CD4-positive, alpha-beta T cell (primary cell): ENCODE measurements at regions of chr20 and their contacts with region 1.

Region 1: DNA sequence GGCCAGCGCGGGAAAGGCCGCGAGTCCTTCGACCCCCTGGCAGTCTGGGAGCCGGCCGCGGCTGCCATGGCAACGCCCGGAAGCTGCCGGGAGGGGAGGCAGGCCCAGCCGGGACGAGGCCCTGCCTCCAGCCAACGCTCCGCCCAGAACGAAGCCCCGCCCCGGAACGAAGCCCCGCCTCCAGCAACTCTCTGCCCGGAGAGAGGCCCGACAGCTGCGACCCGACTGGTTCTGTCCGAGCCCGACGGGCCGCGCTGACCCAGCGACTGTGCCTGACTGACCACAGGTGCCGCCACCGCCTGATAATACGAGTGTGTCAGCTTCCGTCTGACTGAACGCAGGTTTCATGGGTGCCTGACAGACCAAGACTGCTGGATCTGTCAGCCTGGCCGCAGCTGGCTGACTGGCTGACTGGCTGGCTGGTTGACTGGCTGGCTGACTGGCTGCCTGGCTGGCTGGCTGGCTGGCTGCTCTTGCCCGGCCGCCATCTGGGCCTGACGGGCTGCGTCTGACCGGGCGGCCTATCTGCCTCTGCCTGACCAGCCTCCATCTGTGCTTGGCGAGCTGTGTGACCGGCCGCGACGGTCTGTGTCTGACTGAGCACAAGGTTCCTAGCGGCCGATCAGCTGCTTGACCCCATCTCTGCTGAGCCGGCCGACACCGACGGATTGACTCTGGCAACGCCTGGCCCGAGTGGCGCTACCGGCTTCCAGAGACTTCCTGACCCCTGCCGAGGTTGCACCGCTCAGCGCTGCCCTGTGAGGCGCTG is 89.7 kb upstream of the EPB41L1 start:
- DNase-seq: peak; percentile 86 to 97 (median 94)
- ATAC-seq: peak; percentile 98
- H3K4me3 ChIP-seq: peak overlapping the region; percentile 78
- H3K4me3 Mint-ChIP-seq: peak overlapping the region; percentile 90
- H3K27ac ChIP-seq: peak overlapping the region in 1 of 2 donors; percentile 11
- H3K27ac Mint-ChIP-seq: no peak overlapping the region
- H3K4me1 ChIP-seq: peaks cover 19% of the 10 kb centered on the region
- H3K4me1 Mint-ChIP-seq: peaks cover 5% of the 10 kb centered on the region
- H3K27me3 ChIP-seq: no peaks in the 10 kb centered on the region
- H3K27me3 Mint-ChIP-seq: no peaks in the 10 kb centered on the region
- CTCF ChIP-seq: no peak

Region 2: DNA sequence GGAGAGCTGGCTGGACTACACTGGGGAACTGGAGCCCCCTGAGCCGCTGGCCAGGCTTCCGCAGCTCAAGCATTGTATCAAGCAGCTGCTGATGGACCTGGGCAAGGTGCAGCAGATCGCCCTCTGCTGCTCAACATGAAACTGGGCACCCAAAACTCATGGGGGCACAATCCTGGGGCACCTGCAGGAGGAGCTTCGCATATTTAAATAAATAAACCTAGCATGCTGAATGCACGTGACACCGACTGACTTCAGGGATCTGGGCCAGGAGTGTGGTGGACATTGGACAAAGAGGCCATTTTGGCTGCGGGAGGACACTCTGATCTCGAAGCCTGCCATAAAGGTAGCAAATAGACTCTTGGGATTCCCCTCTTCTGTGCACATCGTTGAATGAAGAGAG is 117.4 kb before region 1 on chr20:
- CTCF ChIA-PET with region 1: no interaction called
- POLR2A ChIA-PET with region 1: no interaction called
- intact Hi-C with region 1: no loop called
- DNase-seq: peak in 7 of 14 experiments; percentile 7 to 53 (median 13)
- ATAC-seq: peak; percentile 68
- H3K4me3 ChIP-seq: no peak overlapping the region
- H3K4me3 Mint-ChIP-seq: no peak overlapping the region
- H3K27ac ChIP-seq: no peak overlapping the region
- H3K27ac Mint-ChIP-seq: no peak overlapping the region
- H3K4me1 ChIP-seq: peaks cover 16% of the 10 kb centered on the region
- H3K4me1 Mint-ChIP-seq: peaks cover 14% of the 10 kb centered on the region
- H3K27me3 ChIP-seq: no peaks in the 10 kb centered on the region
- H3K27me3 Mint-ChIP-seq: no peaks in the 10 kb centered on the region
- CTCF ChIP-seq: peak; percentile 44

Region 3: GRCh38 chr20:36050436-36051317 is 14.2 kb before region 1 on chr20:
- CTCF ChIA-PET with region 1: no interaction called
- POLR2A ChIA-PET with region 1: interaction called, 11 read pairs
- intact Hi-C with region 1: loop called (anchors 1 kb)
- DNase-seq: peak; percentile 77 to 94 (median 90)
- ATAC-seq: peak; percentile 95
- H3K4me3 ChIP-seq: peak overlapping the region; percentile 87
- H3K4me3 Mint-ChIP-seq: peak overlapping the region; percentile 98
- H3K27ac ChIP-seq: peak overlapping the region; percentile 83 to 88
- H3K27ac Mint-ChIP-seq: peak overlapping the region; percentile 94
- H3K4me1 ChIP-seq: peaks cover 7% of the 10 kb centered on the region
- H3K4me1 Mint-ChIP-seq: peaks cover 55% of the 10 kb centered on the region
- H3K27me3 ChIP-seq: no peaks in the 10 kb centered on the region
- H3K27me3 Mint-ChIP-seq: no peaks in the 10 kb centered on the region
- CTCF ChIP-seq: no peak

Region 4: DNA sequence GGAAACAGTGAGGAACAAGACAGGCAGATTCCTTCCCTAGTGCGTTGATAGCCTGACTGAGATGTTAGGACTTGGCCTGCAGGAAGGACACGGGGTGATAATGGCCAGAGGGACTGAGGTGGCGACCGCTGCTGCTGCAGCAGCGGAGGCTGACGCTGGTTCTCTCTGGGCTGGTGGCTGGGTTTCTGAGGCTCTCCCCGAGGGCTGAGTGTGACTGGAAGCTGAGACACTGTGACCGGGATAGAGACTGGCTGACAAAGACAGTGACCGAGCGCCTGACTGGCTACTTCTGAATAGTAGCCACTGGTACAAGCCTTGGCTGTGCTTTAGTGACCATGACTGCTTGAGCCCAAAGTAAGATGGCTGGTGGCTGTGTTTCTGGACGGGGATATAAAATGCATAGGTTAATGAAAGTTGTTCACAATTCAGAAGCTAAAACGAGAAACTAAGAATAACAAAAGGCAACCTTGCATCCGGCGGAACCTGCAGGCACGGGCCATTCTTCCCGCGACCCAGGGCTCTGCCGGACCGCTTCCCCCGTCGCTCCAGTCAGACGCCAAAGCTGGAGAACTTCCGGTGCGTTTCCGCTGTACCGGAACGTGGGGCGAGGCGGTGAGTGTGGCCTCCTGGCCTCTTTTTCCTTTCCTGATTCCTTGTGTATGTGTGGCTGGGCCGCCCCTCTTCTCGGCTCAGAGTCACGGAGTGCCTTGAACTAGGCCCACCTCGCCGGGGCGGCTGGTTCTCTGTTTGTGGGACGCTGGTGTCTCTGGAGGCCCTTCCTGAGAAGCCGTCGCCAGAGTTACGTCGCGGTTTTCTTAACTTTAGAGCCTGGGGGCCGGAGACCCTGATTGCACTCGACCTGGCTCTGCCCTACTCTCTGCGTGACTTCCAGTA is 171.3 kb after region 1 on chr20 and contains the start of gene AAR2:
- CTCF ChIA-PET with region 1: no interaction called
- POLR2A ChIA-PET with region 1: no interaction called
- intact Hi-C with region 1: loop called in 1 of 2 experiments (anchors 5 kb)
- DNase-seq: peak; percentile 65 to 85 (median 75)
- ATAC-seq: peak; percentile 96
- H3K4me3 ChIP-seq: peak within 1 kb of the TSS; percentile 98
- H3K4me3 Mint-ChIP-seq: peak within 1 kb of the TSS; percentile 95
- H3K27ac ChIP-seq: peak within 1 kb of the TSS; percentile 42 to 76
- H3K27ac Mint-ChIP-seq: peak within 1 kb of the TSS; percentile 83
- H3K4me1 ChIP-seq: peaks cover 36% of the 10 kb centered on the region
- H3K4me1 Mint-ChIP-seq: peaks cover 42% of the 10 kb centered on the region
- H3K27me3 ChIP-seq: no peaks in the 10 kb centered on the region
- H3K27me3 Mint-ChIP-seq: no peaks in the 10 kb centered on the region
- CTCF ChIP-seq: no peak
- total RNA-seq, gene AAR2: 22.5 to 24.3 TPM

Region 5: GRCh38 chr20:36460648-36461599 is 396.1 kb after region 1 on chr20:
- CTCF ChIA-PET with region 1: no interaction called
- POLR2A ChIA-PET with region 1: no interaction called
- intact Hi-C with region 1: loop called in 1 of 2 experiments (anchors 5 kb)
- DNase-seq: peak; percentile 79 to 98 (median 90)
- ATAC-seq: peak; percentile 75
- H3K4me3 ChIP-seq: peak overlapping the region; percentile 82
- H3K4me3 Mint-ChIP-seq: peak overlapping the region; percentile 89
- H3K27ac ChIP-seq: peak overlapping the region; percentile 76 to 93
- H3K27ac Mint-ChIP-seq: peak overlapping the region; percentile 84
- H3K4me1 ChIP-seq: peaks cover 50% of the 10 kb centered on the region
- H3K4me1 Mint-ChIP-seq: peaks cover 50% of the 10 kb centered on the region
- H3K27me3 ChIP-seq: no peaks in the 10 kb centered on the region
- H3K27me3 Mint-ChIP-seq: no peaks in the 10 kb centered on the region
- CTCF ChIP-seq: no peak